Dorsolateral prefrontal cortex (tissue), 120 donors: ENCODE measurements at regions of chr17 and their contacts with region 1.

Region 1: DNA sequence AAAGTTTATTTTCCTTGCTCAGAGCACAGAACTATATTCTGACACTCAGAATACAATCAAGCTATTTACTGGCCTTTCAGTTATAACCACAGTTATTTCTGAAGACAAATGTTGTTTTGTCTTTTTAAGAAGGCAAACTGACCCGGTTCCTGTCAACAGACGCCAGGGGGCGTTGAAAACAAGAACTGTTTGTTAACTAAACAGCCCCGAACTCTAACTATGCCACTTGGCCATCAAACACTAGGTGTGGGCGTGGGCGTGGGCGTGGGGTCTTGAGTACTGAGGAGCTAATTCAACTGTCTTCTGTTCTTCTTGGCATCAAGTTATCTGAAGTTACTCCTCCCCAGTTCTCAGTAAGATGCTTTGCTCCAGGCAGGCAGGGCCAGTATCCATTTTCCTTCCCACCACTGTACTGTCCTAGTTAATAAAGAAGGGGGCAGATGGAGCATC is 63.2 kb upstream of the MTMR4 start:
- DNase-seq: peak; percentile 42 to 86 (median 76)
- H3K4me3 ChIP-seq: peak overlapping the region in 11 of 59 donors; percentile 0 to 37 (median 11)
- H3K27ac ChIP-seq: peak overlapping the region in 58 of 59 donors; percentile 45 to 97 (median 85)
- H3K27me3 ChIP-seq: no peaks in the 10 kb centered on the region
- CTCF ChIP-seq: peak; percentile 49 to 89 (median 69)

Region 2: DNA sequence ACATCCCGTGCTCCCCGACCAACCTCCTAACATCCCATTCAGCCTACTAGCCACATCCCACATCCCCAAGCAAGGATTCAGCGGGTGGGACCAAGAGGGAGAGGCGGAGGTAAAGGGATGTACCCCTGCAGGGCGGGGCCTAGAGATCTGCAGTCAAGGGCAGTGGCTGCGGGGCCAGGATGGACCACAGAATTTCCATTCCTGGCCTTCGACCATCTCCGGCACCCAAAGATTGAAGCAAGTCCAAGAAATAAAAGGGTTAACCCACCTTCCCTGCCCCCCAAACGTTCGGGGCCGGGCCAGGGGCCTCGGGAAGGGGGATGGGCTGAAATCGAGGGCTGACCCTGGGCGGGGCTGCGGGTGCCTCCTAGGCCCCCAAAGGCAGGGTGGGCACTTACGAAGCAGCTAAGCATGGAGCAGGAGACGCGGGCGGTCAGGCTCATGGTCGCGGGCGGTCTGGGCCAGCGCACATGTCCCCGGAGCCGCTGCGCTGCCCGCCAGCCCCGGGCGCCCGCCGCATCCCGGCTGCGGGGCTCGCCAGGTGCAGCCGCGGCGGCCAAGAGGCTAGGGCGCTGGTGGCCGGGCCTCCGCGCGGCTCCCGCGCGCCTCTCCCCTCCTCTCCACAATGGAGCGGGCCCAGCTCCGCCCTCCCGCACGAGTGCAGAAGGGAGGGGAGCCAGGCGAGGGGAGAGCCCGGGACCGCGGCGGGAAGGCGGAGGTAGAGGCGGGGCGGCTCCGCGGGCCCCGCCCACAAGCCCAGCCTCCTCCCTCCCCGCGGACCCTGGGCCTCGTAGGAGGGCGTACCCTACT is 63.5 kb before region 1 on chr17 and contains the start of gene MTMR4:
- intact Hi-C with region 1: no loop called
- DNase-seq: peak in 9 of 10 donors; percentile 61 to 90 (median 85)
- H3K4me3 ChIP-seq: peak within 1 kb of the TSS; percentile 56 to 91 (median 77)
- H3K27ac ChIP-seq: peak within 1 kb of the TSS; percentile 29 to 99 (median 81)
- H3K27me3 ChIP-seq: no peaks in the 10 kb centered on the region
- CTCF ChIP-seq: peak in 3 of 56 donors; percentile 7 to 14 (median 9)
- total RNA-seq, gene MTMR4: 66.6 to 122 (median 90.6) TPM

Region 3: DNA sequence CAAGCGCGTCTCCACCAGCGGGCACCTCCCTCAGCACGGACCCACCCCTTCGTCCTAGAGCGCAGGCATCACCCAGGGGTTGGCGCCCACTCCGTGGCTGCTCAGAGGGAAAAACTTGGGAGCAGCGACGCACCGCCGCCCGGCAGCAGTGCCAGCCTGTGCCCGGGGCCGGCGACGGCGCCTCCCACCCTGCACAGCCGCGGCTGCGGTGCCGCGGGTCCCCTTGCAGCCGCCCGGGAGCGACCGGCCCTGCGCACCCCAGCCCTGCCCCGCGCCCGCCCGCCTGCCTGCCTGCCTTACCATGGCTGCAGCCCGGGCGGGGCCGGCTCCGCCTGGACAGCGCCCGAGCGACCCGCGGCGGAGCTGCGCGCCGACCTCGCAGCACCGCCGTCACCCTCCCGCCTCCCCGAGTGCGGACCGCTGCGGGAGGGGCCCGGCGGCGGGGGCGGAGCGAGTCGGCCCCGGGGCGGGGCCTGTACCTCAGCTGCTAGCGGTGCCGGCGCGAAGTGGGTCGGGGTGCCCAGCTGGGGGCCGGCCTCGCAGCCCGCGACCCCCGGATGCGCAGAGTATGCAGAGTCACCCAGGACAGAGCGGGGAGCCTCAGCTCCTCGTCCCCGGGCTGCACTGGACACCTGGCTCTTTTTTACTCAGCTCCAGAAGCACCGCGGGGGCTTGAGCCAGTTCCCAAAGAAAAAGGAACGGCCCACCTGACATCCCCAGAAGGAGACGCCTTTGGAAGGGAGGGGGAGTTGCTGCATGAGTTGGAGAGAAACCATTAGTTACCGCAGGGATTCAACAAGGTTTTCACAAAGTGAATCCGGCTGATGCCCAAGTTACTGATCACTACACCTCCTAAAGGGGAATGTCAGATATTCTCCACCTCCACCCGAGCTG is 45.8 kb before region 1 on chr17:
- intact Hi-C with region 1: loop called (anchors 2 to 5 kb)
- DNase-seq: peak; percentile 67 to 91 (median 81)
- H3K4me3 ChIP-seq: peak overlapping the region; percentile 64 to 93 (median 81)
- H3K27ac ChIP-seq: peak overlapping the region; percentile 85 to 100 (median 99)
- H3K27me3 ChIP-seq: no peaks in the 10 kb centered on the region
- CTCF ChIP-seq: peak in 2 of 56 donors; percentile 11 to 16